ENCODE measurements at regions of chr6 and their contacts with region 1.

Region 1: GRCh38 chr6:85460921-85461797 is 11.3 kb downstream of the NT5E start:
- DNase-seq: peak; percentile 91
- H3K4me3 Mint-ChIP-seq: peak overlapping the region; percentile 70
- H3K27ac Mint-ChIP-seq: peak overlapping the region; percentile 93
- H3K4me1 Mint-ChIP-seq: peaks cover 91% of the 10 kb centered on the region
- H3K27me3 Mint-ChIP-seq: no peaks in the 10 kb centered on the region

Region 2: GRCh38 chr6:85416049-85416448 is 45.1 kb before region 1 on chr6:
- intact Hi-C with region 1: loop called (anchors 2 kb)
- DNase-seq: no peak
- H3K4me3 Mint-ChIP-seq: peak overlapping the region; percentile 4
- H3K27ac Mint-ChIP-seq: peak overlapping the region; percentile 58
- H3K4me1 Mint-ChIP-seq: peaks cover 33% of the 10 kb centered on the region
- H3K27me3 Mint-ChIP-seq: peaks cover 6% of the 10 kb centered on the region

Region 3: DNA sequence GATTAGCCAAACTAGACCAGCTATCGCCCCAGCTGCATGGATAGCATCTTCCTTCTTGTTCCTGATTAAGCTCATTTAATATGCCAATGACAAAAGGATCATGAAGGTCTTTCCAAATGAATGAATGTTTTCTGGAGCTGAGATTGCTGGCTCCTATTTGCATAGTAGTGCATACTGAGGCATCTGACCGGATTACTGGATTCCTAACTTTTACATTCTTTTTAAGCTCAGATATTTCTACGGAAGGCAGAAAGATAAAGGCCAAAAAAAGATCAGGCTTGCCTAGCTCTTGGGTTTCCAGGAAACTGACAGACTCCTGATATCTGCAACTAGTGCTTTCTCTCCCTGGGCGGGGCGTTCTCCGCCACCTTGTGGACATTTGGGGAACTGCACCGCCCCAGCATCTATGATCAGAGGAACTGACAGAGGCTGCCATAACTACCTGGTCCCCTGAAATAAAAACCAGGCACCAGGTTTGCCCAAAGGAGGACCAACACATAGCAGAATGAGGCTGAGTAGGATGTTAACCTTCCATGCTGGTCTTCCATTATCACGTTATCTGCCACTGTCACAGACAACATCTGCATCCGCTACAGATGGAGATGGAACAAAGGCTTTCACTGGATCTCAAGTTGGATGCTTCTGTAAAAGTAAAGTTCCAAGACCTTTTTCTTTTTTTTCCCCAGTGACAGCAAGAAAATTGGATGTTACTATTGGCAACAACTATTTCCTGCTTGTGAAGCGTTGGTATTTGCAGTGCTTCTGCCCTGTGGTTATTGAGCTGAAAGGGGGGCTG is 21.9 kb after region 1 on chr6:
- intact Hi-C with region 1: loop called (anchors 1 kb)
- DNase-seq: peak; percentile 96
- H3K4me3 Mint-ChIP-seq: peak overlapping the region; percentile 4
- H3K27ac Mint-ChIP-seq: peak overlapping the region; percentile 9
- H3K4me1 Mint-ChIP-seq: peaks cover 17% of the 10 kb centered on the region
- H3K27me3 Mint-ChIP-seq: no peaks in the 10 kb centered on the region

Region 4: GRCh38 chr6:85714893-85715530 is 253.9 kb after region 1 on chr6:
- intact Hi-C with region 1: no loop called
- DNase-seq: no peak
- H3K4me3 Mint-ChIP-seq: no peak overlapping the region
- H3K27ac Mint-ChIP-seq: no peak overlapping the region
- H3K4me1 Mint-ChIP-seq: no peaks in the 10 kb centered on the region
- H3K27me3 Mint-ChIP-seq: no peaks in the 10 kb centered on the region

Measured in activated CD4-positive, alpha-beta T cell treated with anti-CD3 and anti-CD28 coated beads, Interleukin-2, amount 10 ng/mL, durations not matched to agents 24 days and 14 days (primary cell).